Activated naive CD4-positive, alpha-beta T cell treated with anti-CD3 and anti-CD28 coated beads for 36 hours (primary cell): ENCODE measurements at regions of chr7 and their contacts with region 1.

Region 1: GRCh38 chr7:140375892-140376730 is 22.2 kb downstream of the SLC37A3 start:
- DNase-seq: peak; percentile 59
- H3K4me3 Mint-ChIP-seq: peak overlapping the region; percentile 58
- H3K27ac Mint-ChIP-seq: peak overlapping the region; percentile 96
- H3K4me1 Mint-ChIP-seq: peaks cover 37% of the 10 kb centered on the region
- H3K27me3 Mint-ChIP-seq: no peaks in the 10 kb centered on the region

Region 2: GRCh38 chr7:140096459-140096858 is 279.7 kb before region 1 on chr7:
- CTCF ChIA-PET with region 1: no interaction called
- intact Hi-C with region 1: no loop called
- DNase-seq: no peak
- H3K4me3 Mint-ChIP-seq: no peak overlapping the region
- H3K27ac Mint-ChIP-seq: no peak overlapping the region
- H3K4me1 Mint-ChIP-seq: no peaks in the 10 kb centered on the region
- H3K27me3 Mint-ChIP-seq: no peaks in the 10 kb centered on the region

Region 3: GRCh38 chr7:140342727-140343514 is 33.2 kb before region 1 on chr7:
- CTCF ChIA-PET with region 1: no interaction called
- intact Hi-C with region 1: no loop called
- DNase-seq: peak; percentile 13
- H3K4me3 Mint-ChIP-seq: no peak overlapping the region
- H3K27ac Mint-ChIP-seq: no peak overlapping the region
- H3K4me1 Mint-ChIP-seq: no peaks in the 10 kb centered on the region
- H3K27me3 Mint-ChIP-seq: no peaks in the 10 kb centered on the region

Region 4: GRCh38 chr7:140358412-140359051 is 17.6 kb before region 1 on chr7:
- CTCF ChIA-PET with region 1: no interaction called
- intact Hi-C with region 1: loop called (anchors 1 kb)
- DNase-seq: no peak
- H3K4me3 Mint-ChIP-seq: peak overlapping the region; percentile 38
- H3K27ac Mint-ChIP-seq: peak overlapping the region; percentile 4
- H3K4me1 Mint-ChIP-seq: peaks cover 26% of the 10 kb centered on the region
- H3K27me3 Mint-ChIP-seq: no peaks in the 10 kb centered on the region

Region 5: DNA sequence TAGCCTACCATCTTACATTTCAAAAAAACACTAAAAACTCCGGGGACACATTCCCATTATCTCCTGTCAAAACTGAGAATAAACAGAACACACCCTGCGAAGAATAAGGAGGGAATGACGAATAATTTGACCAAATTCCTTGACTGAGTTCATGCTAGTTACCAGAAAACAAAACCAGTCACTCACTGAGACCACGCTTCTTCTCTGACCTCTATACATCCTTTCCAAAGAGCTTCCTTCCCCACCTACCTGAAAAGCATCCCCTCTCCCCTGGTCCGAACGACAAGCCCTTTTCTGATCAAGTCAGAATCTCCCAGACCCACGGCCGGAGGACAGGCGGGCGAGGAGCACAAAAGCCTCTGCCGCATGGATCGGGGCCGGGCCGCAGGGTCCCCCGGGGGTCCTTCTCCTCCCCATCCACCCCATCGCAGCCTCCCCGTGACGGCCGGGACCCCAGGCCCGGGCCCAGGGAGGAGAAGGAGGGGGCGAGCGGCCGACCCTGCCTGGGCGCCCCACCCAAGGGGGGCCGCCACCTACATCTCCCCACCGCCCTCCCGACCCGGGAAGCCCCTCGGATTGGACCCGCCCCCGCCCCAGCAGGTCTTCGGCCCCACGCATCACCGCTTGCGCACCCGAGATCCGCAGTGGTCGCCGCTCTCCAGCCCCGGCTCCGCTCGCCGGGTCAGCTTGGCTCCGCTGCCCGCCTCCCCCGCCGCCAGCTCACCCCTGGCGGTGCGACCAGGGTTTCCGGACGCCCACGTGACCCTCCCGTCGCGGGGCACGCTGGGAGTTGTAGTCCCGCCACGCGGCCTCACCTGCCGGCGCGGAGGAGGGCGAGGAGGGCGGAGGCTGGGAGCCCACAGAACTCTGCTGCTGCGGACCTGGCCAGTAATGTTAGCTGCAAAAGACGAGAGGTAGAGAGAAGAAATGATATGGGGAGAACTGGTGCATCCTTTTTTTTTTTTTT is 22.0 kb after region 1 on chr7 and contains the start of gene SLC37A3:
- CTCF ChIA-PET with region 1: interaction called, 4 read pairs
- intact Hi-C with region 1: loop called (anchors 1 kb)
- DNase-seq: peak; percentile 90
- H3K4me3 Mint-ChIP-seq: peak within 1 kb of the TSS; percentile 81
- H3K27ac Mint-ChIP-seq: peak within 1 kb of the TSS; percentile 69
- H3K4me1 Mint-ChIP-seq: peaks cover 26% of the 10 kb centered on the region
- H3K27me3 Mint-ChIP-seq: no peaks in the 10 kb centered on the region
- total RNA-seq, gene SLC37A3: 25.6 to 28.7 TPM

Region 6: DNA sequence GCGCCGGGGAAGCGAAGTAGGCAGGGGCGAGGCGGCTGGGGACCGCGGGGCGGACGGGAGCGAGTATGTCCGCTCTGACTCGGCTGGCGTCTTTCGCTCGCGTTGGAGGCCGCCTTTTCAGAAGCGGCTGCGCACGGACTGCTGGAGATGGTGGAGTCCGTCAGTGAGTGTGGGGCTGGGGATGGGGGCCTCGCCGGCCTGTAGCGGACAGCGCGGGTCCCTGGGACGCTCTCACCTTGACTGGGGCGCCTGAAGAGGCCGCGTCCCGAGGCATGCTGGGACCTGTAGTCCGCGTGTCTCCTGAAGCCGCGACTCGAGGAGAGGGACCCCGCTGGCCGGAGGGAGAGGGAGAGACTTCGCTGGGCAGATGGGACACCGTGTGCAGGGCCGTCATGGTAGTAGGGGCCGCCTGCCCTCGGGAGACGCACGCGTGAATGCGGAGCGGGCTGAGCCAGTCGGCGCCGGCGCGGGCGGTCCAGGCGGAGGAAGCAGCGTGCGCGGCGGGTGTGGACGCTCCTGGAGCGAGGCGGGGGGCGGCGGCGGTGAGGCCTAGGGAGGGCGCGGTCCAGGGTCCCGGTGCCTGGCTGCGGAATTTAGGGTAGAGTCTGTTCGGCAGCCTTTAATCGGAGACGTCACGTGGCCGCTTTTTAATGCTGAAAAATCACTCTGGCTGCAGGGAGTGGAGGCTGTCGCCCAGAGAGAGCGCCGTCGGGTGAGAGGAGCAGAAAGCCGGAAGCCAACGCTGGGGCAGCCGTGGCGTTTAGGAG is 320.8 kb after region 1 on chr7 and contains the start of gene NDUFB2:
- CTCF ChIA-PET with region 1: no interaction called
- intact Hi-C with region 1: loop called (anchors 1 kb)
- DNase-seq: peak; percentile 75
- H3K4me3 Mint-ChIP-seq: peak within 1 kb of the TSS; percentile 98
- H3K27ac Mint-ChIP-seq: peak within 1 kb of the TSS; percentile 99
- H3K4me1 Mint-ChIP-seq: peaks cover 34% of the 10 kb centered on the region
- H3K27me3 Mint-ChIP-seq: no peaks in the 10 kb centered on the region
- total RNA-seq, gene NDUFB2: 167 to 179 TPM